ENCODE measurements at regions of chr12 and their contacts with region 1.

Region 1: GRCh38 chr12:52327052-52327829 is 6.0 kb upstream of the KRT83 start:
- DNase-seq: peak; percentile 63 to 91
- ATAC-seq: peak; percentile 86 to 99 (median 98)
- H3K4me3 ChIP-seq: no peak overlapping the region
- H3K4me3 Mint-ChIP-seq: no peak overlapping the region
- H3K27ac ChIP-seq: no peak overlapping the region
- H3K27ac Mint-ChIP-seq: no peak overlapping the region
- H3K4me1 ChIP-seq: peaks cover 3% of the 10 kb centered on the region
- H3K4me1 Mint-ChIP-seq: peaks cover 8 to 10% of the 10 kb centered on the region in 2 donors
- H3K27me3 ChIP-seq: peaks cover 2% of the 10 kb centered on the region
- H3K27me3 Mint-ChIP-seq: peaks cover 50 to 72% of the 10 kb centered on the region in 2 donors
- CTCF ChIP-seq: peak; percentile 81

Region 2: GRCh38 chr12:52156736-52157565 is 170.3 kb before region 1 on chr12:
- intact Hi-C with region 1: loop called (anchors 1 kb)
- DNase-seq: peak; percentile 67 to 83
- ATAC-seq: peak; percentile 49 to 63 (median 61)
- H3K4me3 ChIP-seq: no peak overlapping the region
- H3K4me3 Mint-ChIP-seq: no peak overlapping the region
- H3K27ac ChIP-seq: no peak overlapping the region
- H3K27ac Mint-ChIP-seq: no peak overlapping the region
- H3K4me1 ChIP-seq: peaks cover 19% of the 10 kb centered on the region
- H3K4me1 Mint-ChIP-seq: peaks cover 8 to 10% of the 10 kb centered on the region in 2 donors
- H3K27me3 ChIP-seq: peaks cover 3% of the 10 kb centered on the region
- H3K27me3 Mint-ChIP-seq: peaks cover 0 to 5% of the 10 kb centered on the region in 2 donors
- CTCF ChIP-seq: peak; percentile 79

Region 3: DNA sequence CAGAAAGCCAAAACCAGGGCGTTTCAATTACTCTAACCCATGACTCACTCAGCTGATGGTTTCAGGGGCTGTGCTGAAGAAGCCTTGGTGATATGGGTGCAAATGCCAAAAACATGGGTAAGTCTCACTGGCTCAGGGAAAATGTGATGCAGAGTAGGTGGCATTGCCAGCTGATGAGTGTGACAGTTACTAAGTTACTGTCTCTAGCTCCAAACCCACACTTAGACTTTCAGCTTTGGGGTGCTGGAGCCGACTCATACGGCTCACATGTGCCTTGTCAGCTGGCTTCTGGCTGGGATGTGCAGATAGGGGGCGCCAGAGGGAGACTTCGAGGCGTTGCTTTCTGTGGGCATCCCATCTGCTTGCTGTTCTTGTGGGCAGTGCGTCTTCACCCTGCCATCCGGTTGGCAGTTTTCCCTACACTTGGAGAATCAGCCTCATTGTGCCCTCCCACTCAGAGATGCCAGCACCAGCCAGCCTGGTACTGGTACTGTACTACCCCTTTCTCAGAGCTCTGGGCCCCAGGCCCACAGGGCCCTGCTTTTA is 105.3 kb before region 1 on chr12:
- intact Hi-C with region 1: loop called (anchors 2 kb)
- DNase-seq: peak; percentile 45 to 57
- ATAC-seq: peak; percentile 64 to 79 (median 69)
- H3K4me3 ChIP-seq: no peak overlapping the region
- H3K4me3 Mint-ChIP-seq: no peak overlapping the region
- H3K27ac ChIP-seq: no peak overlapping the region
- H3K27ac Mint-ChIP-seq: no peak overlapping the region
- H3K4me1 ChIP-seq: no peaks in the 10 kb centered on the region
- H3K4me1 Mint-ChIP-seq: no peaks in the 10 kb centered on the region
- H3K27me3 ChIP-seq: peaks cover 6% of the 10 kb centered on the region
- H3K27me3 Mint-ChIP-seq: peaks cover 27 to 46% of the 10 kb centered on the region in 2 donors
- CTCF ChIP-seq: peak; percentile 20

Region 4: DNA sequence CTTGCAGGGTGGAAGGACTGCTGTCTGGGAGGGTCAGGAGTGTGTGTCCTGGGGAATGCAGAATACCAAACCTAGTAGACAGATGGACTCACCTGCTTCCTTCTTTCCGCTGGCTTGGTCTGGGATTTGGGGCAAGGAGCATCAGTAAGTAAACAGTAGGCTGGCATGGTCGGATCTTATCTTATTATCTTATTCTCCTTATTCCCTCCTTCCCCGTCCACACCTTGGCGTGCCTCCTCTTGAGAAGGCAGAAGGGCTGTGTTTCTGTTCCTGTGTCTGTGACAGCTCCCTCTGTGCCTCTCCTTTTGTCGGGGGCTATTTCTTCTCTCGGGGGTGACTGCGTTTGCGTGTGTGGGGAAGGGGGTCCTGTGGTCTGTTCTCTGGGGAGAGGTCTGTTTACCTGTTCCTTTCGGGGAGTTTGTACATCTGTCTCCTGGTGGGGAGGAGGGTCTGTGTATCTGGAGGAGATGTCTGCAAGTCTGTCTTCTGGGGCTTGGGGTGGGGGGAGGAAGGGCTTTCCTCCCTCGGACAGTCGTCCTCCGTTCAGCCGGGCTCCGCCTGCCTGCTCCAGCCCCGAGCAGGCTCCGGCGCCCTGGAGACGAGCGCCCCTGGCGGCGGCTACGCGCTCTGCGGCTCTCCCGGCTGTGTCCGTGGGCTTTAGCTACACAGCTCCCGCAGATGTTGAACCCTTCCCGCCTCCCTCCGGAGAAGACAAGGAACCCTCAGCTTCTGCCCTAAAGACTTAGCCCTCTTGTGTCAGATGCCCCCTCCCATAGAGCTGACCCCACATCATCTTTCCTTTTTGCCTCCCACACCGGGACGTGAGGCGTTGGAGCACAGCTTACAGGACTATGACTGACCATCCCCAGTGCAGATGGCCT is 48.5 kb before region 1 on chr12:
- intact Hi-C with region 1: loop called (anchors 2 kb)
- DNase-seq: peak; percentile 78 to 80
- ATAC-seq: peak; percentile 88 to 100 (median 100)
- H3K4me3 ChIP-seq: no peak overlapping the region
- H3K4me3 Mint-ChIP-seq: no peak overlapping the region
- H3K27ac ChIP-seq: no peak overlapping the region
- H3K27ac Mint-ChIP-seq: no peak overlapping the region
- H3K4me1 ChIP-seq: peaks cover 9% of the 10 kb centered on the region
- H3K4me1 Mint-ChIP-seq: peaks cover 13 to 14% of the 10 kb centered on the region in 2 donors
- H3K27me3 ChIP-seq: peaks cover 4% of the 10 kb centered on the region
- H3K27me3 Mint-ChIP-seq: peaks cover 28 to 35% of the 10 kb centered on the region in 2 donors
- CTCF ChIP-seq: peak; percentile 99

Region 5: GRCh38 chr12:52307836-52308805 is 19.1 kb before region 1 on chr12:
- intact Hi-C with region 1: loop called (anchors 2 kb)
- DNase-seq: peak; percentile 50 to 71
- ATAC-seq: peak; percentile 81 to 86 (median 83)
- H3K4me3 ChIP-seq: peak overlapping the region; percentile 19
- H3K4me3 Mint-ChIP-seq: peak overlapping the region; percentile 87
- H3K27ac ChIP-seq: no peak overlapping the region
- H3K27ac Mint-ChIP-seq: peak overlapping the region; percentile 82 to 85
- H3K4me1 ChIP-seq: peaks cover 37% of the 10 kb centered on the region
- H3K4me1 Mint-ChIP-seq: peaks cover 51 to 56% of the 10 kb centered on the region in 2 donors
- H3K27me3 ChIP-seq: peaks cover 24% of the 10 kb centered on the region
- H3K27me3 Mint-ChIP-seq: peaks cover 10 to 60% of the 10 kb centered on the region in 2 donors
- CTCF ChIP-seq: peak; percentile 20

Region 6: GRCh38 chr12:52495389-52495788 is 168.1 kb after region 1 on chr12:
- intact Hi-C with region 1: no loop called
- DNase-seq: no peak
- ATAC-seq: no peak
- H3K4me3 ChIP-seq: no peak overlapping the region
- H3K4me3 Mint-ChIP-seq: no peak overlapping the region
- H3K27ac ChIP-seq: no peak overlapping the region
- H3K27ac Mint-ChIP-seq: no peak overlapping the region
- H3K4me1 ChIP-seq: no peaks in the 10 kb centered on the region
- H3K4me1 Mint-ChIP-seq: peaks cover 0 to 6% of the 10 kb centered on the region in 2 donors
- H3K27me3 ChIP-seq: peaks cover 2% of the 10 kb centered on the region
- H3K27me3 Mint-ChIP-seq: peaks cover 33 to 45% of the 10 kb centered on the region in 2 donors
- CTCF ChIP-seq: no peak

Region 7: GRCh38 chr12:52949413-52950331 is 622.4 kb after region 1 on chr12:
- intact Hi-C with region 1: no loop called
- DNase-seq: no peak
- ATAC-seq: no peak
- H3K4me3 ChIP-seq: peak overlapping the region; percentile 30
- H3K4me3 Mint-ChIP-seq: peak overlapping the region; percentile 80
- H3K27ac ChIP-seq: no peak overlapping the region
- H3K27ac Mint-ChIP-seq: no peak overlapping the region
- H3K4me1 ChIP-seq: peaks cover 10% of the 10 kb centered on the region
- H3K4me1 Mint-ChIP-seq: peaks cover 0 to 16% of the 10 kb centered on the region in 2 donors
- H3K27me3 ChIP-seq: peaks cover 6% of the 10 kb centered on the region
- H3K27me3 Mint-ChIP-seq: peaks cover 7 to 25% of the 10 kb centered on the region in 2 donors
- CTCF ChIP-seq: no peak